Sigmoid colon (tissue), 7 donors: ENCODE measurements at regions of chr9 and their contacts with region 1.

Region 1: DNA sequence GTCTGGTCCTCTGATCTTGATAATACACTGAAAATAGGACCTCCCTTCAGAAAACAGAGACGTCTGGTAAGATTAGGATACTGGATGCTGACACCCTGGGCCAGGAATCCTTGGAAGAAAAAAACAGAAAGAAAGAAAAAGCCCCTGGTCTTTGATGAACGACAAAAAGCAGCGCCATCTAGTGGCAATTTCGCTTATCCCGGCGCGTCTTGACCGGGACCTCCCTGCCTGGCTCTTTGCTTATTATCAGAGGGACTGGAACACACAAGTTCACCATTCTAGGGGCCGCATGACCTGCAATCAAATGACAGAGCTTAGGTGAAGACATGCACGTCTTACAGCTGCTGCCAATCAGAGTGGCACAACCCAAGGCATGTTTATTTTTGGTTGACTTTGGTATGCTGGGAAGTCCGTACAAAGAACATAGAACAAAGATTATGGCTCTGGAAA is 114.9 kb upstream of the NFIB start:
- DNase-seq: peak; percentile 81
- H3K4me3 ChIP-seq: no peak overlapping the region
- H3K27ac ChIP-seq: no peak overlapping the region
- H3K4me1 ChIP-seq: peaks cover 0 to 21% (median 15%) of the 10 kb centered on the region in 4 donors
- H3K27me3 ChIP-seq: no peaks in the 10 kb centered on the region
- CTCF ChIP-seq: peak; percentile 13 to 78 (median 48)
- EP300 ChIP-seq: no peak
- POLR2A ChIP-seq: no peak

Region 2: DNA sequence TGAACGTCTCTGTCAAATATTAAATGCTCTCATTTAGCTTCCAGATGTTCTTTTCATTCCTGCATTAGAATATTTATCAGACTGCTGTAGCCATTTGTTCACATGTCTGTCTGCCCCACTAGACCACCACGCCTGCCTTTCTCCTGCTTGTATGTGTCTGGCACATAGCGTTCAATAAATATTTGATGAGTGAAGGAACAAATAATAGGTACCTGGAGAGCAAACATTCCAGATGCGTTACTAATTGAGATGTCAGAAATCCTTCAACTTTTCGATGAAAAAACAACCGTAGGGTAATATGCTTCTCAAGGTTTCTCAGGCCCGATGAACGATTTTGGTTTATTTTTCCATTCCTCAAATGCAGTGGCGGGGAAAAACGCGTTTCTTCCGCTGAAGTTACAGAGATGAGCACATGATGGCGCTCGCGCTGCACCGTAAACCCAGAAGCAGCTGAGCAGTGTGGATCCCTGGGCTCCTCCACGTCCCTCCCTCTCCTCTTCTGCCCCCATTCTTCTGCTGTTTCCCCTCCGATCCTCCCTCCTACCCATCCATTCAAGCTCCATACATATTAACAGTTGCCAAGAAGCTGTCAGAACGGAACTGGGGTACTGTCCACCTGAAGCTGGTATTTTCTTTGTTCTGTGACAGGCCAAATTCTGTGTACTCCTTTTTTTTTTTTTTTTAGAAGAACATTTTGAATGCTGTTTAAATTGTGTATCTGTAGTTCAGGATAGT is 1394.7 kb before region 1 on chr9:
- intact Hi-C with region 1: loop called (anchors 10 kb)
- DNase-seq: peak; percentile 81
- H3K4me3 ChIP-seq: peak overlapping the region in 3 of 4 donors; percentile 21 to 37 (median 30)
- H3K27ac ChIP-seq: peak overlapping the region in 1 of 4 donors; percentile 51
- H3K4me1 ChIP-seq: peaks cover 0 to 9% (median 0%) of the 10 kb centered on the region in 4 donors
- H3K27me3 ChIP-seq: no peaks in the 10 kb centered on the region
- CTCF ChIP-seq: peak; percentile 61 to 78 (median 72)
- EP300 ChIP-seq: no peak
- POLR2A ChIP-seq: no peak

Region 3: GRCh38 chr9:13213337-13213736 is 1215.5 kb before region 1 on chr9:
- intact Hi-C with region 1: loop called (anchors 10 kb)
- DNase-seq: no peak
- H3K4me3 ChIP-seq: no peak overlapping the region
- H3K27ac ChIP-seq: no peak overlapping the region
- H3K4me1 ChIP-seq: no peaks in the 10 kb centered on the region
- H3K27me3 ChIP-seq: no peaks in the 10 kb centered on the region
- CTCF ChIP-seq: peak in 1 of 4 experiments; percentile 21
- EP300 ChIP-seq: no peak
- POLR2A ChIP-seq: no peak

Region 4: GRCh38 chr9:13351778-13352386 is 1076.9 kb before region 1 on chr9:
- intact Hi-C with region 1: loop called (anchors 5 kb)
- DNase-seq: no peak
- H3K4me3 ChIP-seq: no peak overlapping the region
- H3K27ac ChIP-seq: no peak overlapping the region
- H3K4me1 ChIP-seq: no peaks in the 10 kb centered on the region
- H3K27me3 ChIP-seq: no peaks in the 10 kb centered on the region
- CTCF ChIP-seq: peak; percentile 23 to 67 (median 53)
- EP300 ChIP-seq: no peak
- POLR2A ChIP-seq: no peak

Region 5: DNA sequence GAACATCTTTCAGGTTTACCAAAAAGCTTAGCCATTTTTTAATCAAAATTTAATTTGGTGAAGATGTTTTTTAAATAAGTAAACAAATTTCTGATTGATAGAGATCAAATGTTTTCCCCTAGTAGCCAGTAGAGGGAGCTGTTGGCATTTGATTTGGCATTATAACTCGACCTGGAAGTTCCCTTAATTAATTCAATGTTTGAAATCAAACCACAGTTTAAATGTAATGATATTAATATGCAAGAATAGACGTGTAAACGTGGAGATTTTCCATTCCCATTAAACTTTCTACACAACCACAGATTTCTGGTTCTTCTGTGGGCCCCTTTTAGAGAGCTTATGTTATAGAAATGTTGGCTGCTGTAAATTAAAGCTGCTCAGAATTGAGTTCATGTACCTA is 1001.2 kb before region 1 on chr9:
- intact Hi-C with region 1: loop called (anchors 5 kb)
- DNase-seq: no peak
- H3K4me3 ChIP-seq: no peak overlapping the region
- H3K27ac ChIP-seq: peak overlapping the region in 1 of 4 donors; percentile 12
- H3K4me1 ChIP-seq: peaks cover 0 to 29% (median 22%) of the 10 kb centered on the region in 4 donors
- H3K27me3 ChIP-seq: no peaks in the 10 kb centered on the region
- CTCF ChIP-seq: peak; percentile 54 to 72 (median 60)
- EP300 ChIP-seq: no peak
- POLR2A ChIP-seq: no peak

Region 6: GRCh38 chr9:14358523-14358922 is 70.3 kb before region 1 on chr9:
- intact Hi-C with region 1: loop called (anchors 5 kb)
- DNase-seq: no peak
- H3K4me3 ChIP-seq: no peak overlapping the region
- H3K27ac ChIP-seq: no peak overlapping the region
- H3K4me1 ChIP-seq: peaks cover 0 to 49% (median 32%) of the 10 kb centered on the region in 4 donors
- H3K27me3 ChIP-seq: no peaks in the 10 kb centered on the region
- CTCF ChIP-seq: no peak
- EP300 ChIP-seq: no peak
- POLR2A ChIP-seq: no peak

Region 7: DNA sequence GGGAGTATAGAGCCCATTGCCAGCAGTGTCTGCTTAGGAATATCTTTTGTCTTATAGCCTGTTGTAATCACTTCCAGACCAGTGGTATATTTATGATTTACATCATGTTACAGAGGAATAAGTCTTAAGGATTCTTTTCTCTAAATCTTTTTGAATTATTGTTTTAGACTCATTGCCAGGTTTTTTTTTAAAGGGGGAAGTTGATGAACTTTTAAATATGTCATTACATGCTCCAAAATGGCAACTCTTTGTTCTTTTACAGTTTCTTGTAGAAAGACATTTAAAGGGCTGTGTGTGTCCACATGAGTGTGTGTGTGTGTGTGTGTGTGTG is 55.5 kb before region 1 on chr9:
- intact Hi-C with region 1: no loop called
- DNase-seq: no peak
- H3K4me3 ChIP-seq: no peak overlapping the region
- H3K27ac ChIP-seq: peak overlapping the region; percentile 39 to 73 (median 62)
- H3K4me1 ChIP-seq: peaks cover 0 to 34% (median 28%) of the 10 kb centered on the region in 4 donors
- H3K27me3 ChIP-seq: no peaks in the 10 kb centered on the region
- CTCF ChIP-seq: no peak
- EP300 ChIP-seq: no peak
- POLR2A ChIP-seq: no peak